CD4-positive, alpha-beta T cell (primary cell): ENCODE measurements at regions of chr6 and their contacts with region 1.

Region 1: GRCh38 chr6:17589406-17590096 is 10.6 kb upstream of the FAM8A1 start:
- DNase-seq: peak in 5 of 14 experiments; percentile 36 to 61 (median 49)
- ATAC-seq: peak; percentile 94
- H3K4me3 ChIP-seq: no peak overlapping the region
- H3K4me3 Mint-ChIP-seq: peak overlapping the region; percentile 31
- H3K27ac ChIP-seq: no peak overlapping the region
- H3K27ac Mint-ChIP-seq: peak overlapping the region; percentile 76
- H3K4me1 ChIP-seq: peaks cover 9% of the 10 kb centered on the region
- H3K4me1 Mint-ChIP-seq: peaks cover 25% of the 10 kb centered on the region
- H3K27me3 ChIP-seq: no peaks in the 10 kb centered on the region
- H3K27me3 Mint-ChIP-seq: no peaks in the 10 kb centered on the region
- CTCF ChIP-seq: peak; percentile 14

Region 2: GRCh38 chr6:17621003-17621402 is 31.5 kb after region 1 on chr6:
- CTCF ChIA-PET with region 1: no interaction called
- POLR2A ChIA-PET with region 1: no interaction called
- intact Hi-C with region 1: loop called in 1 of 2 experiments (anchors 5 kb)
- DNase-seq: no peak
- ATAC-seq: no peak
- H3K4me3 ChIP-seq: no peak overlapping the region
- H3K4me3 Mint-ChIP-seq: no peak overlapping the region
- H3K27ac ChIP-seq: no peak overlapping the region
- H3K27ac Mint-ChIP-seq: peak overlapping the region; percentile 9
- H3K4me1 ChIP-seq: no peaks in the 10 kb centered on the region
- H3K4me1 Mint-ChIP-seq: peaks cover 17% of the 10 kb centered on the region
- H3K27me3 ChIP-seq: no peaks in the 10 kb centered on the region
- H3K27me3 Mint-ChIP-seq: no peaks in the 10 kb centered on the region
- CTCF ChIP-seq: no peak

Region 3: GRCh38 chr6:17656092-17656491 is 66.5 kb after region 1 on chr6:
- CTCF ChIA-PET with region 1: interaction called, 4 read pairs
- POLR2A ChIA-PET with region 1: no interaction called
- intact Hi-C with region 1: loop called in 1 of 2 experiments (anchors 5 kb)
- DNase-seq: no peak
- ATAC-seq: no peak
- H3K4me3 ChIP-seq: no peak overlapping the region
- H3K4me3 Mint-ChIP-seq: no peak overlapping the region
- H3K27ac ChIP-seq: no peak overlapping the region
- H3K27ac Mint-ChIP-seq: no peak overlapping the region
- H3K4me1 ChIP-seq: no peaks in the 10 kb centered on the region
- H3K4me1 Mint-ChIP-seq: peaks cover 6% of the 10 kb centered on the region
- H3K27me3 ChIP-seq: no peaks in the 10 kb centered on the region
- H3K27me3 Mint-ChIP-seq: no peaks in the 10 kb centered on the region
- CTCF ChIP-seq: no peak

Region 4: DNA sequence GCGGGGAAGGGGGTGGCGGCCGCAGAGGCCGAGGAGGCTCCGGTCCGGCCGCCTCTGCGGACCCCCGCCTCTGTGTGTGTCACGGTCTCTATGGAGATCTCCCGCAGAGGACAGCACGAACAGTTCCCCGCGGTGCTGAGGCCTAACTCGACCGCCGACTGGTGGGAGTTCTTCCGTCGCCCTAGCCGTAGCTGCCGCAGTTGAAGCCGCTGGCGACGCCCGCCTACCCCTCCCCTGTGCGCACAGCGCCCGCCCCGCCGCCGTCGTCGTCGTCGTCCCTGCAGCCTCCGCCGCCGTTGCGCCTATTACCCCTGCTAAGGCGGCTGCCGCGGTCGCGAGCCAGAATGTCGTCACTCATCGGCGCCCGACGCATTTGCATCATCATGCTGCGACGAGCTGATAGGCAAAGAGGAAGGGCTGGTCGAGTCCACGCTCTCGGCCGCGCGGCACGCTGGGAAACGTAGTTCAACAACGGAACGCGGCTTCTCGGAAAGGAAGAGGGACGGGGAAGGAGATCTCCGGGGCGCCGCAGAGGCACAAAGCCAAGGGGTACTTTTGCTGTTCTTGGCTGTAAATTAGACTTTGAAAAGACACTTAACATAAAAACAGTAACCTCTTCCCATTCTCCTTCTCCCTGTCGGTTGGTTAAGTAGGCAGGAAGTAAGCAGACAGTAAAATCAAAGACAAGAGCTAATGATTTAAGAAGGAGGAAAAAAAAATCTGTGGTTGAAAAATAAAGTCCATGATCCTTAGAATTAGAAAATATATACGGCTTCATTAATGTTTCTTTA is 117.2 kb after region 1 on chr6 and contains the start of gene NUP153:
- CTCF ChIA-PET with region 1: interaction called, 4 read pairs
- POLR2A ChIA-PET with region 1: interaction called, 15 read pairs
- intact Hi-C with region 1: loop called in 1 of 2 experiments (anchors 5 kb)
- DNase-seq: peak; percentile 98 to 100 (median 100)
- ATAC-seq: peak; percentile 79
- H3K4me3 ChIP-seq: peak within 1 kb of the TSS; percentile 82
- H3K4me3 Mint-ChIP-seq: peak within 1 kb of the TSS; percentile 95
- H3K27ac ChIP-seq: peak within 1 kb of the TSS; percentile 98 to 99
- H3K27ac Mint-ChIP-seq: peak within 1 kb of the TSS; percentile 93
- H3K4me1 ChIP-seq: peaks cover 41% of the 10 kb centered on the region
- H3K4me1 Mint-ChIP-seq: peaks cover 48% of the 10 kb centered on the region
- H3K27me3 ChIP-seq: no peaks in the 10 kb centered on the region
- H3K27me3 Mint-ChIP-seq: no peaks in the 10 kb centered on the region
- CTCF ChIP-seq: no peak
- total RNA-seq, gene NUP153: 58.3 to 61.0 TPM

Region 5: DNA sequence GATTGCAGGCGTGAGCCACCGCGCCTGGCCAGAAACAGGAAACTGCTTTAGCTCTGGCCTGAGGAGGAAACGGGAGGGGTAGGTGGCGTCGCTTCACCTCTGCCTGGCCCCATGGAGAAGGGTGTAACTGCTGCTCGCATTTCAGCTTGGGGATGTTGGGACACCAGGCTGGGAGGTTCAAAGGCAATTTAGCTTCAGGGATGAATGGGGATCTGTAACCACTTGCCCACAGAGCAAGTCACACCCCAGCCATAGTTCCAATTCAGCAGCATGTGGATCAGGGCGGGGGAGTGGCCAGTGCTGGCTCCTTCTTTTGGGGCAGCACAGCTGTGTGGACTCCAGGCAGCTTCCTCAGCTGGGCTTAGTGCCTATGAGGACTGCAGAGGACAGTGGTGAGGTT is 152.0 kb after region 1 on chr6:
- CTCF ChIA-PET with region 1: no interaction called
- POLR2A ChIA-PET with region 1: no interaction called
- intact Hi-C with region 1: no loop called
- DNase-seq: no peak
- ATAC-seq: no peak
- H3K4me3 ChIP-seq: no peak overlapping the region
- H3K4me3 Mint-ChIP-seq: no peak overlapping the region
- H3K27ac ChIP-seq: no peak overlapping the region
- H3K27ac Mint-ChIP-seq: no peak overlapping the region
- H3K4me1 ChIP-seq: no peaks in the 10 kb centered on the region
- H3K4me1 Mint-ChIP-seq: peaks cover 3% of the 10 kb centered on the region
- H3K27me3 ChIP-seq: peaks cover 0 to 4% of the 10 kb centered on the region in 2 experiments
- H3K27me3 Mint-ChIP-seq: peaks cover 7% of the 10 kb centered on the region
- CTCF ChIP-seq: no peak